ENCODE measurements at regions of chr10 and their contacts with region 1.

Region 1: GRCh38 chr10:131943021-131943814 is 38.5 kb downstream of the BNIP3 start:
- DNase-seq: no peak
- H3K4me3 ChIP-seq: no peak overlapping the region
- CTCF ChIP-seq: peak; percentile 30

Region 2: GRCh38 chr10:131909014-131909808 is 34.0 kb before region 1 on chr10:
- in situ Hi-C with region 1: loop called (anchors 5 kb)
- DNase-seq: no peak
- H3K4me3 ChIP-seq: no peak overlapping the region
- CTCF ChIP-seq: no peak